Transverse colon (tissue), 4 donors: ENCODE measurements at regions of chr13 and their contacts with region 1.

Region 1: GRCh38 chr13:48233046-48233907 is at the start of gene ITM2B:
- DNase-seq: peak; percentile 82
- H3K4me3 ChIP-seq: peak within 1 kb of the TSS; percentile 89 to 99 (median 99)
- H3K27ac ChIP-seq: peak within 1 kb of the TSS; percentile 99 to 100 (median 99)
- H3K4me1 ChIP-seq: peaks cover 9 to 52% (median 35%) of the 10 kb centered on the region in 4 donors
- H3K27me3 ChIP-seq: no peaks in the 10 kb centered on the region
- CTCF ChIP-seq: peak; percentile 8 to 54 (median 33)
- EP300 ChIP-seq: no peak
- POLR2A ChIP-seq: peak; percentile 86
- total RNA-seq, gene ITM2B: 117 to 352 (median 310) TPM

Region 2: DNA sequence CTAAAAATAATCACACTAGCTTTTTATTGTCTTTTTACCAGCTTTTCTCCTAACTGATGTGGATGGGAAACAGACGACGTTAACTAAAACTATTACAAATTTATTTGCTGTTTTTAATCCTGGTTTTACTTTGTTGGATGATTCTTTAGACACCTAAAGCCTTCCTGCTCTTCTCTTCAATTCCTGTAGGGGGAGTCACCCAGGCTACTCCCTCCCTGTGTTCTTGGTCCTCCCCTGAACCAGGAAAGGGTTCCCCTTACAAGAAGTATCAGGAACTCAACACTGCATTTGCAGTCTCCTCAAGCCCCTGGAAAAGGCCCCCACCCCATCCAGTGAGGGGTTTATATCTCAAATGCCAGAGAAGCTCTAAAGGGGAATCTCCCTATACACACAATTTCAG is 438.3 kb before region 1 on chr13:
- in situ Hi-C with region 1: no loop called
- intact Hi-C with region 1: no loop called
- DNase-seq: no peak
- H3K4me3 ChIP-seq: no peak overlapping the region
- H3K27ac ChIP-seq: no peak overlapping the region
- H3K4me1 ChIP-seq: no peaks in the 10 kb centered on the region
- H3K27me3 ChIP-seq: no peaks in the 10 kb centered on the region
- CTCF ChIP-seq: peak in 2 of 5 experiments; percentile 14 to 29
- EP300 ChIP-seq: no peak
- POLR2A ChIP-seq: no peak

Region 3: DNA sequence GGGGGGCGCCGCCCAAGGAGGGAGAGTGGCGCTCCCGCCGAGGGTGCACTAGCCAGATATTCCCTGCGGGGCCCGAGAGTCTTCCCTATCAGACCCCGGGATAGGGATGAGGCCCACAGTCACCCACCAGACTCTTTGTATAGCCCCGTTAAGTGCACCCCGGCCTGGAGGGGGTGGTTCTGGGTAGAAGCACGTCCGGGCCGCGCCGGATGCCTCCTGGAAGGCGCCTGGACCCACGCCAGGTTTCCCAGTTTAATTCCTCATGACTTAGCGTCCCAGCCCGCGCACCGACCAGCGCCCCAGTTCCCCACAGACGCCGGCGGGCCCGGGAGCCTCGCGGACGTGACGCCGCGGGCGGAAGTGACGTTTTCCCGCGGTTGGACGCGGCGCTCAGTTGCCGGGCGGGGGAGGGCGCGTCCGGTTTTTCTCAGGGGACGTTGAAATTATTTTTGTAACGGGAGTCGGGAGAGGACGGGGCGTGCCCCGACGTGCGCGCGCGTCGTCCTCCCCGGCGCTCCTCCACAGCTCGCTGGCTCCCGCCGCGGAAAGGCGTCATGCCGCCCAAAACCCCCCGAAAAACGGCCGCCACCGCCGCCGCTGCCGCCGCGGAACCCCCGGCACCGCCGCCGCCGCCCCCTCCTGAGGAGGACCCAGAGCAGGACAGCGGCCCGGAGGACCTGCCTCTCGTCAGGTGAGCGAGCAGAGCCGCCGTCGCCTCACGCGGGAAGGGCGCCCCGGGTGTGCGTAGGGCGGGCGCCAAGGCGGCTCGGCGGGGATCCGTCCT is 70.3 kb after region 1 on chr13 and contains the start of gene RB1:
- in situ Hi-C with region 1: no loop called
- intact Hi-C with region 1: loop called (anchors 2 kb)
- DNase-seq: peak; percentile 94
- H3K4me3 ChIP-seq: peak within 1 kb of the TSS; percentile 85 to 98 (median 90)
- H3K27ac ChIP-seq: peak within 1 kb of the TSS; percentile 98 to 100 (median 99)
- H3K4me1 ChIP-seq: peaks cover 6 to 28% (median 16%) of the 10 kb centered on the region in 4 donors
- H3K27me3 ChIP-seq: no peaks in the 10 kb centered on the region
- CTCF ChIP-seq: peak in 1 of 5 experiments; percentile 31
- EP300 ChIP-seq: peak; percentile 25
- POLR2A ChIP-seq: peak; percentile 96
- total RNA-seq, gene RB1: 14.6 to 31.0 (median 23.2) TPM